Naive thymus-derived CD8-positive, alpha-beta T cell (primary cell): ENCODE measurements at regions of chr12 and their contacts with region 1.

Region 1: DNA sequence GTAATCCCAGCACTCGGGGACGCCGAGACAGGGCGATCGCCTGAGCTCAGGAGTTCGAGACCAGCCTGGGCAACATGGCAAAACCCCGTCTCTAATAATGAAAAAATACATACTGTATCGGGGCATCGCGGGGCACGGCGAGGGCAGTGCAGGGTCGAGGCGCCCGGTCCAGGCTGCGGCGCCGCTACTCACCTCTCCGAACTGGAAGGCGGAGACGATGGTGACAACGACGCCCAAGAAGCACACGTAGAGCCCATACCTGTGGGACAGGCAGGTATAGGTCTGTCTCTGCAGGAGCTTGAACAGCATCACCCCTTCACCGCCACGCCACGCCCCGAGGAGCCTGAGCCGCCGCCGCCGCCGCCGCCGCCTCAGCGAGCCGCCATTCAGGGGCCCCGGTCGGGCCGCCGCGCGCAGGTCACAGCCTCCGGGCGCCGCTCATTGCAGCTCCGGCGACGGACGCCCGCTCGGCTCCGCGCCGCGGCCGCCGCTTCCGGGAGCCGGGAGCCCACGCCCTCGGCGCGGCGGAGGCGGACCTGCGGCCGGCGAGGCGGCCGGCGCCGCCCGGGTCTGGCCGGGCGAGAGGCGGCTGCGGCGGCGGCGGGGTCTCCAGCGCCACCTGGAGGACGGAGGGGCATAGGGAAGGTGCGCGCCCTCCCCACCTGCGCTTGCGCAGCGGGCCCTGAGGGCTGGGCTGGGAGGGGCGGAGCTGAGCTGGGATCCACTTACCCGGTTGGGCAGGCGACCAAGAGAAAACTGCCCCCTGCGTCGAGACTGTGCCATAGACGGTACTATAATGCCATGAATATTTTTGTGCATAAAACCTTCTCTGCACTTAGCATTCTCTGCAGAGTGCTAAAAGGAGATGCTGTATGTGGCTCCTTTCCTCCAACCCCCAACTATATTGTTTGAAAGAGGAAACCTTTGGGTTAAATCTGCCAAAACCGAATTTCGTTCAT is at the start of gene GNPTAB:
- DNase-seq: peak; percentile 92 to 97 (median 95)
- ATAC-seq: peak; percentile 85 to 86
- H3K4me3 Mint-ChIP-seq: peak within 1 kb of the TSS; percentile 88 to 99 (median 98)
- H3K27ac Mint-ChIP-seq: peak within 1 kb of the TSS; percentile 91 to 98 (median 96)
- H3K4me1 Mint-ChIP-seq: peaks cover 14 to 50% (median 39%) of the 10 kb centered on the region in 4 donors
- H3K27me3 Mint-ChIP-seq: no peaks in the 10 kb centered on the region
- polyA plus RNA-seq, gene GNPTAB: 25.9 to 43.5 (median 40.9) TPM

Region 2: GRCh38 chr12:101773650-101774162 is 56.9 kb before region 1 on chr12:
- POLR2A ChIA-PET with region 1: interaction called, 26 read pairs
- DNase-seq: peak; percentile 46 to 81 (median 66)
- ATAC-seq: peak; percentile 90 to 93
- H3K4me3 Mint-ChIP-seq: no peak overlapping the region
- H3K27ac Mint-ChIP-seq: peak overlapping the region in 3 of 10 donors; percentile 29 to 34 (median 32)
- H3K4me1 Mint-ChIP-seq: peaks cover 5 to 10% (median 7%) of the 10 kb centered on the region in 4 donors
- H3K27me3 Mint-ChIP-seq: no peaks in the 10 kb centered on the region

Region 3: GRCh38 chr12:101819467-101819866 is 11.2 kb before region 1 on chr12:
- POLR2A ChIA-PET with region 1: interaction called, 10 read pairs
- DNase-seq: no peak
- ATAC-seq: no peak
- H3K4me3 Mint-ChIP-seq: no peak overlapping the region
- H3K27ac Mint-ChIP-seq: peak overlapping the region in 1 of 10 donors; percentile 8
- H3K4me1 Mint-ChIP-seq: peaks cover 28 to 68% (median 63%) of the 10 kb centered on the region in 4 donors
- H3K27me3 Mint-ChIP-seq: no peaks in the 10 kb centered on the region